Colonic mucosa (tissue), 4 donors: ENCODE measurements at regions of chr19 and their contacts with region 1.

Region 1: GRCh38 chr19:42244347-42245220 is 2.2 kb upstream of the GSK3A start:
- DNase-seq: peak; percentile 95
- H3K4me3 ChIP-seq: peak overlapping the region; percentile 88
- H3K27ac ChIP-seq: peak overlapping the region; percentile 94
- H3K4me1 ChIP-seq: peaks cover 12% of the 10 kb centered on the region
- H3K27me3 ChIP-seq: no peaks in the 10 kb centered on the region
- CTCF ChIP-seq: peak; percentile 56

Region 2: GRCh38 chr19:42132851-42133528 is 111.6 kb before region 1 on chr19:
- intact Hi-C with region 1: loop called (anchors 5 kb)
- DNase-seq: peak; percentile 69
- H3K4me3 ChIP-seq: peak overlapping the region; percentile 28
- H3K27ac ChIP-seq: peak overlapping the region; percentile 20
- H3K4me1 ChIP-seq: peaks cover 3% of the 10 kb centered on the region
- H3K27me3 ChIP-seq: peaks cover 14% of the 10 kb centered on the region
- CTCF ChIP-seq: peak; percentile 97

Region 3: GRCh38 chr19:42199440-42200115 is 45.0 kb before region 1 on chr19:
- intact Hi-C with region 1: no loop called
- DNase-seq: no peak
- H3K4me3 ChIP-seq: no peak overlapping the region
- H3K27ac ChIP-seq: peak overlapping the region; percentile 66
- H3K4me1 ChIP-seq: peaks cover 4% of the 10 kb centered on the region
- H3K27me3 ChIP-seq: no peaks in the 10 kb centered on the region
- CTCF ChIP-seq: no peak

Region 4: DNA sequence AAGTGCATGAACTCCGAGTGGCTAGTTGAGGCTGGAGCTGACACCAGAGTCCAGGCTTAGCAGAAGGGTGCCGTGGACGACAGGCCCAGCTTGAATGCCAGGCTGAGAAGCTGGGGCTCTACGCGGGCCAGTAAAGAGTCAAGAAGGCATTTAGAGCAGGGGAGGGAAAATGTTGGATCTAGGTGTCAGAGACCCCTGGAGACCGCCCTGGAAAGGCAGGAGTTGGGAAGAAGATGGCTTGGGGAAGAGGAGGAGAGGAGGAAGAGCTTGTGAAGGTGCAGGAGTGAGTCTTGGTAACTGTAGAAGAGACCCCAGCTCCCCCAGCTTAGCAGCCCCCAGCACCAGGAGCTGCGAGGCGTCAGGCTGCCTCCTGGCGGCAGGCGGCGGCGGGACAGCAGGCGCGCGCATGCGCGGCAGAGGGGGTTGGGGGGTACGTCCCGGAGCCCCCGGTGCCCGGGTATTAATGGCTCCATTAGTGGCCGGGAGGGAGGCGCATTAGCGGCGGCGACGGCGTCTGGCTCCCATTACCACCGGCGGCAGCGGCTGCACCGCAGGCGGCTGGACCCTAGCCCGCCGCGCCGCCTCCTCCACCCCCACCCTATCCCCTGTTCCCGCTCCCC is 35.1 kb after region 1 on chr19:
- intact Hi-C with region 1: loop called (anchors 2 kb)
- DNase-seq: peak; percentile 69
- H3K4me3 ChIP-seq: peak overlapping the region; percentile 73
- H3K27ac ChIP-seq: peak overlapping the region; percentile 92
- H3K4me1 ChIP-seq: peaks cover 29% of the 10 kb centered on the region
- H3K27me3 ChIP-seq: no peaks in the 10 kb centered on the region
- CTCF ChIP-seq: peak; percentile 82

Region 5: DNA sequence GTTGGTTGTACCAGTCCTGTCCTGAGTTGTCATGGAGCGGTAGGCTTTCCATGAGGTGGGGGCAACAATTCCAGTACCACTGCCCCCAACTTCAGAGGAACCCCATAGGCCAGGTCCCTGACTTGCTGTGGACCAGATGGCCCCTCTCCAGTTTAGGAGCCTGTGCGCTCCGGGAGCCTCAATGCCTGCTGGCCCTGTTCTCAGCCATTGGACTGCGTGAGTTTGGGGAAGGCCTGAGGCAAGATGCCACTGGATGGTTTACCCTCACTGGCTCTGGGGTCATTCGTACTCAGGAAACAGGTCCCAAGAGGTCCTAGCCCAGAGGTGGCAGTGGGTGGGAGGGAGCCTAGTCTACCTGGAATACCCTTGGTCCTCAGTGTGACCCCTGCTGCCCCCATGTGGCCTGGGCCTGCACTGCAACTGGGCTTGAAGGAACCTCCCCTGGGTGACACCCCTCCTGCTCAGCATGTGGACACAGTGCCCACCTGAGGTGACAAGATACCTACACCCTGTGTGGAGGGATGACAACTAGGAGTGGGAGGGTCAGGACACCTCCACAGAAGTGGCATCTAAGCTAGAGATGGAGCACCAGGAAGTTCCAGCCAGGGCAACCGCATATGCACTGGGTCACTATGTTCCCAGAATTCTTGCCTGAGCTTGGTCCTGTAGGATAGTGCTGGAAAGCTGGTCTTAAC is 51.4 kb after region 1 on chr19:
- intact Hi-C with region 1: loop called (anchors 5 kb)
- DNase-seq: peak; percentile 93
- H3K4me3 ChIP-seq: no peak overlapping the region
- H3K27ac ChIP-seq: no peak overlapping the region
- H3K4me1 ChIP-seq: no peaks in the 10 kb centered on the region
- H3K27me3 ChIP-seq: no peaks in the 10 kb centered on the region
- CTCF ChIP-seq: peak; percentile 94

Region 6: DNA sequence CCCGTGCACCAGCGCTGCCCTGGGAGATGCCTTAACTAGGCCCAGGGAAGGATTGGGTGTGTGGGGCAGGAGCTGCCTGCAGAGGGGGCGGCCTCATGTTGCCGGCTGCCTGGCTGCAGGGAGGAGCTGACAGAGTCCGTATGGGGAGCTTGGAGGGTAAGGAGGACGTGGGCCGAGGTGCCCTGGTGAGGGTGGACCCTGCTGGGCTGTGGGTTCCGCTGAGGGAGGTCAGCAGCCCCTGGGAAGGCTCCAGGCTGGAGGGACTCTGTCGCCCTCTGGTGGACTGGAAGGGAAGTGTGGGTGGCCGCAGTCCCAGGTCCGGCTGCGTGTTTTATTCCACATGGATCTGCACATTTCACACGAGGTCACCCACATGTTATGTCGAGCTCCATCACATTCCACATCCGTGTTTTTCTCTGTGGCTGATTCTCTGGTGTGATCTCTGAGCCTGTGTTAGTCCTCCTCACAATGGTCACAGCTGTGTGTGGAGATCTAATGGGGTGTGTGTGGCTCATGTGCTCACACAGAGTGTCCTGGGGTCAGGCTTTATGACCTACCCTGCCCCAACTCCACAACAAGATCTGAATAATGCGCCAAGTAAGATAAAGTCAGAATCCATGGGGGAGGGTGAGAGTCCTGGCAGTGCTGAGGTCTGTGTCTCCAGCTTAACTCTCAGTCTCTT is 351.9 kb after region 1 on chr19:
- intact Hi-C with region 1: no loop called
- DNase-seq: peak; percentile 36
- H3K4me3 ChIP-seq: no peak overlapping the region
- H3K27ac ChIP-seq: no peak overlapping the region
- H3K4me1 ChIP-seq: no peaks in the 10 kb centered on the region
- H3K27me3 ChIP-seq: no peaks in the 10 kb centered on the region
- CTCF ChIP-seq: peak; percentile 95